ENCODE measurements at regions of chr1 and their contacts with region 1.

Region 1: DNA sequence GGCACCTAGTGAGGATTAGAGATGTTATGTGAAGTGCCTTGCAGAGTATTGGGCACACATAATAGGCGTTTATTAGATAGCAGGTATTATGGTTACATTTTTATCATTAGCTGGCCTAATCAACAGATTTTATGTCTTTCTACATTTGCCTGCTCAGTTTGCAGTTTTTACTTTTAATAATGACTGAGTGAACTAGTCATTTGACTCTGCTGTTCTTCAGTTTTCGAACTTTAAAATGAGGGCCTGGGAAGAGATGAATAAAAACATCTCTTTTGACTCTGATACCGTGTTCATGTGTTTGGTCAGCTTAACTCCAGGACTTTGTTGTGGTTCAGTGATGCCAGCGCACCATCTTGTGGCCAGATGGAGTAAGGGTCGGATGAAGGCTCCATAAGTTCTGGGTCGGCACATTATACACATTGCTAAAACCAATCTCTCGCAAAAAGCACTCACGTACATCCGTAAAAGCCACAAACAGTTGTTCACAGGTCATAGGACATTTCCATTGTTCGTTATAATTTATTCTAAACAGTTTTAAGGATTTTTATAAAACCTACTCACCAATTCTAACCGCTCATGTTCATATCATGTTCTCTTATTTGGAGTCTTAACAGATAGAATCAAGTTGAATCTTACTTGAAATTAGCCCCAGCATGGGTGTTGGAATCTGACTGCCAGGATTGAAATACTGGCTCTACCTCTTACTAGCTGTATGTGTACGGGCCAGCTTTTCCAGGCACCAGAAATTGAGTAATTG is 78.4 kb upstream of the GPR88 start:
- DNase-seq: peak; percentile 88
- H3K4me3 Mint-ChIP-seq: peak overlapping the region; percentile 17
- H3K27ac Mint-ChIP-seq: peak overlapping the region; percentile 73
- H3K4me1 Mint-ChIP-seq: peaks cover 58% of the 10 kb centered on the region
- H3K27me3 Mint-ChIP-seq: no peaks in the 10 kb centered on the region

Region 2: DNA sequence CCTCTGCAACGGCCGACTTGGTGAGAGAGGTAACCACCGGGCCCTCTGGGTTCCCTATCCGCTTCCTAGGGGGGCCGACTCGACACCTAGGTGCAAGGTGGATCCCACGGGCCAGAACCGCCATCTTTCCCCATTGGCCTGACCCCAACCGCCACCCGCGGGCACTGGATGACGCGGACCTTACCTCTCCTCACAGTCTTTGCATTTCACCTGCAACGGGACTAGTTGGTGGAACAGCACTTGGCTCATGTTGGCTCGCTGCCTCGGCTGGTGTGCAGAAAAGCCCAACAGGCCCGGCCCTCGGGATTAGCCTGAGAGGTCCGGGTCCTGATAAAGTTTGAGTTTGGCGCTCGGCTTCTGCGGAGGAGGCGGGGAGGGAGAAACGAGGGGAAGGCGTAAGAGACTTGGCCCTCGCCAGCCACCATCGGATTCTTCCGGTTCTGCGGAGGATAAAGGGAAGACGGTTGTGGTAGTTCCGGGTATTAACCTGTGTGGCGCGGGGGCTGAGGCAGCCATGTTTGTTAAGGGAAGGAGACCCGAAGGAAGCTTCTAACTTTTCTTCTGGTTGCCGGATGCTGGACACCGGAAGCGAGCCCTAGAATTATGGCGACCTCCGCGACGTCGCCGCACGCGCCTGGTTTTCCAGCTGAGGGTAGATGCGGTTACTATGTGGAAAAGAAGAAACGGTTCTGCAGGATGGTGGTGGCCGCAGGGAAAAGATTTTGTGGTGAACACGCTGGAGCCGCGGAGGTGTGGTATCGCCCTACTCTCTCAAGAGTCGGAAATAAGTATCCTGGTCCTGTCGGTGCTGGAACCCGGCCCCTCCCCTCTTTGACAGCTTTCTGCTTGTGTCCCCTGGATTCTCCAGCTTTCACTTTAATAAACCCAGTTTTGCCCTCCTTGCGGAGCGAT is 326.7 kb before region 1 on chr1 and contains the starts of genes SASS6 and TRMT13:
- CTCF ChIA-PET with region 1: interaction called, 8 read pairs
- POLR2A ChIA-PET with region 1: no interaction called
- intact Hi-C with region 1: loop called (anchors 1 kb)
- DNase-seq: peak; percentile 97
- H3K4me3 Mint-ChIP-seq: peak within 1 kb of the TSS; percentile 96
- H3K27ac Mint-ChIP-seq: peak within 1 kb of the TSS; percentile 93
- H3K4me1 Mint-ChIP-seq: peaks cover 39% of the 10 kb centered on the region
- H3K27me3 Mint-ChIP-seq: no peaks in the 10 kb centered on the region
- total RNA-seq, gene SASS6: 11.5 to 12.0 TPM
- total RNA-seq, gene TRMT13: 17.5 TPM

Region 3: DNA sequence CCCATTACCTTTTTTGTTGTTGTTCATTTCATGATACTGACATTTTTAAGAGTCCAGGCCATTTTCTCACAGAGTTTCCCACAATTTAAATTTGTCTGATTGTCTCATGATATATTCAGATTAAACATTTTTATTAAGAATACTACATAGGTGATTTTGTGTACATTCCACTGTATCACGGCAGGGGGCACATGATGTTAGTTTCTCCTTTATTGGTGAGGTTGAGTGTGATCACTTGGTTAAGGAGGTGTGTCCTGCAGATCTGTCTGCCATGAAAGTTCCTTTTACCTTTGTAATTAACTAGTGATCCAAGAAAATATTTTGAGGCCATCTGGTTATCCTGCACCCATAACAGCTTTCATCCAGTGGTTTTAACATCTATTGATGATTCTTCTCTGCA is 181.7 kb before region 1 on chr1:
- CTCF ChIA-PET with region 1: interaction called, 9 read pairs
- POLR2A ChIA-PET with region 1: no interaction called
- intact Hi-C with region 1: loop called (anchors 1 kb)
- DNase-seq: peak; percentile 38
- H3K4me3 Mint-ChIP-seq: no peak overlapping the region
- H3K27ac Mint-ChIP-seq: no peak overlapping the region
- H3K4me1 Mint-ChIP-seq: peaks cover 22% of the 10 kb centered on the region
- H3K27me3 Mint-ChIP-seq: no peaks in the 10 kb centered on the region

Region 4: DNA sequence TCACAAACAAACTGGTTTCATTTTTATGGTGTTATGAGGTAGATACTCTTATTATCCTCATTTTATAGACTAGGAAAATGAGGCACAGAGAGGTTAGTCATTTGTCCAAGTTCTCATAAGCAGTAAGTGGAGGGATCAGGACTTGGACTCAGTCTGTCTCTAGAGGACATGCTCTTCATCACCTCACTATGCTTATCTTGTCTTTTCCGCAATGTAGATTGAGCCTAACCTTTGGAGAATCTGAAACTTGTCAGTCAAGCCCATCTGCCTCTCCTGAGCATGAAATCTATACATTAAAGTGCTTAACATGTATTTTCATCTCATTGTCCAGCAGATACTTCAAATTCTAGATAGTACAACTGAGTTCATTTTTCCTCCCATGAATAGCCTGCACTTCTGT is 119.0 kb before region 1 on chr1:
- CTCF ChIA-PET with region 1: no interaction called
- POLR2A ChIA-PET with region 1: no interaction called
- intact Hi-C with region 1: no loop called
- DNase-seq: no peak
- H3K4me3 Mint-ChIP-seq: no peak overlapping the region
- H3K27ac Mint-ChIP-seq: no peak overlapping the region
- H3K4me1 Mint-ChIP-seq: no peaks in the 10 kb centered on the region
- H3K27me3 Mint-ChIP-seq: no peaks in the 10 kb centered on the region

Region 5: DNA sequence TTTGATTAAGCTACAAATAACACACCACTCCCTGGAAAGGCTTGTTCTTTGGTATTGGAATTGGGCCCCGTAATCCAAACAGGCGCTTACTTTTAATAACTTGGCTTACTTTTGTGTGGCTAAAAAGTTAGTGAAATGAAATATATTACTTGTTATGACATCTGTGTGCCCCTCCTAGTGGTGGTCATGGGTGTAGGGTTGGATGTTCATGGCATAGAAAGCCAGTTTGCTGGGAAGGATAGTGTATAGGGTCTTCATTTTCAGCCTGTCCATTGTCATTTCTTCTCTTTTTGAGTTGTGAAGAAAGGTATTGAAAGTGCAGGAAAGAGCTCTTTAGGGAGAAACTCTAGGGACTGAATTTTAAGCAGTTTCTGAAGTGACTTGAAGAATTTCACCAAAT is 101.3 kb before region 1 on chr1:
- CTCF ChIA-PET with region 1: interaction called, 54 read pairs
- POLR2A ChIA-PET with region 1: interaction called, 11 read pairs
- intact Hi-C with region 1: loop called (anchors 2 kb)
- DNase-seq: no peak
- H3K4me3 Mint-ChIP-seq: no peak overlapping the region
- H3K27ac Mint-ChIP-seq: peak overlapping the region; percentile 59
- H3K4me1 Mint-ChIP-seq: peaks cover 80% of the 10 kb centered on the region
- H3K27me3 Mint-ChIP-seq: no peaks in the 10 kb centered on the region

Region 6: DNA sequence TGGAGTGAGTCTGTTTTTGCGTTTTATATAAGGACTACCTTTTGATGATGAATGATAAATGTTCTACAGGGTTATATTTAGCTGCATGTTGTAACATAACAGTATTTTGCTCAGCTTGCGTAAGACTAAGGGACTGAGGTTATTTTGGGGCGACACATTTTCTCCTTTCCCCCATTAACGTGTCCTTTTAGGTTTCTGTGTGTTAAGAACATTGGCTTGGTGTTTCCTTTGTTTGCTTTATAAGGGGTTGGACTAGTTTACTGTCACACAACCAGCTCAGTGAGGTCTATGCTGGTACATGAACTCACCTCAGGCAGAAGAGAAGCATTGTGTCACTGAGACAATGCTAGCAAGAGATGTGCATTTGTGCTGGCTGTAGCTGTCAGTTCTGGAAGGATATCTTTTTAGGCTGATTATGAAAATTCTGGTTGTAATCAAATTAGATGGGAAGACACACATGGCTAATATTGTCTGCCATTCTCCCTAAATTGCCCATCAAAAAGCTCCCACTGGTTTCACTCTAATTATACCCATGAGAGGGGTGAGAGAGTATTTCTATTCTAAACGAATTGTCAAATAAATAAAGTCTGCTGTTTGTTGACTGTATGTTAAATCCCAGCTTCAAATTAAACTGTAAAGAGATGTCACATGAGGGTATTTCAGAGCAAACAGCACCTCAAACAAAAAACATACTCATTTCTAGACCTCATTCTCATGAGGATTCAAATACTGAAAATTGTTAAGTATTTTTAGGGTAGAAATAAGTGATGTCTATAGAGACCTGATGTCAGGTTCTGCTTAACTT is 44.6 kb before region 1 on chr1:
- CTCF ChIA-PET with region 1: interaction called, 9 read pairs
- POLR2A ChIA-PET with region 1: interaction called, 4 read pairs
- intact Hi-C with region 1: loop called (anchors 1 kb)
- DNase-seq: no peak
- H3K4me3 Mint-ChIP-seq: peak overlapping the region; percentile 39
- H3K27ac Mint-ChIP-seq: peak overlapping the region; percentile 90
- H3K4me1 Mint-ChIP-seq: peaks cover 72% of the 10 kb centered on the region
- H3K27me3 Mint-ChIP-seq: no peaks in the 10 kb centered on the region

Region 7: GRCh38 chr1:100443811-100444571 is 15.5 kb before region 1 on chr1:
- CTCF ChIA-PET with region 1: interaction called, 20 read pairs
- POLR2A ChIA-PET with region 1: interaction called, 3 read pairs
- intact Hi-C with region 1: no loop called
- DNase-seq: peak; percentile 65
- H3K4me3 Mint-ChIP-seq: peak overlapping the region; percentile 82
- H3K27ac Mint-ChIP-seq: peak overlapping the region; percentile 98
- H3K4me1 Mint-ChIP-seq: peaks cover 84% of the 10 kb centered on the region
- H3K27me3 Mint-ChIP-seq: no peaks in the 10 kb centered on the region

Region 8: DNA sequence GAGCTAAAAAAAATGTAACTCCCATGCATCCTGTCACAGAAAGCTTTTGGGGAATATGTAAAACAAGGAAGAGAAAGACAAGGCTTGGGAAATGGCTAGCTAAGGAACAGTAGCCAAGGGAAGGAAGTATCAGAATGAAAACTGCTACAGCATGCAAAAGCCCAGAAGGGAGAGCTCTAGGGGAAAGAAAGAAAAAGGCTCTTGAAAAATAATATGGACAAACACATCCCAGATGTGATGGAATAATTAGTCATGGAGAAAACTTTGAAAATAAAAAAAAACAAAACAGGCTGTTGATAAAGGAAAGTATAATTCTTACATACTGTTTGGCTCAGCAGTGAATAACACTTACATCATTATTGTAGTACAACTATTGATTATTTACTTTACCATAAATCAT is 212.1 kb after region 1 on chr1:
- CTCF ChIA-PET with region 1: no interaction called
- POLR2A ChIA-PET with region 1: no interaction called
- intact Hi-C with region 1: no loop called
- DNase-seq: no peak
- H3K4me3 Mint-ChIP-seq: no peak overlapping the region
- H3K27ac Mint-ChIP-seq: no peak overlapping the region
- H3K4me1 Mint-ChIP-seq: no peaks in the 10 kb centered on the region
- H3K27me3 Mint-ChIP-seq: peaks cover 5% of the 10 kb centered on the region

Region 9: GRCh38 chr1:100746542-100746932 is 287.0 kb after region 1 on chr1:
- CTCF ChIA-PET with region 1: no interaction called
- POLR2A ChIA-PET with region 1: no interaction called
- intact Hi-C with region 1: no loop called
- DNase-seq: no peak
- H3K4me3 Mint-ChIP-seq: no peak overlapping the region
- H3K27ac Mint-ChIP-seq: no peak overlapping the region
- H3K4me1 Mint-ChIP-seq: no peaks in the 10 kb centered on the region
- H3K27me3 Mint-ChIP-seq: peaks cover 5% of the 10 kb centered on the region

Region 10: DNA sequence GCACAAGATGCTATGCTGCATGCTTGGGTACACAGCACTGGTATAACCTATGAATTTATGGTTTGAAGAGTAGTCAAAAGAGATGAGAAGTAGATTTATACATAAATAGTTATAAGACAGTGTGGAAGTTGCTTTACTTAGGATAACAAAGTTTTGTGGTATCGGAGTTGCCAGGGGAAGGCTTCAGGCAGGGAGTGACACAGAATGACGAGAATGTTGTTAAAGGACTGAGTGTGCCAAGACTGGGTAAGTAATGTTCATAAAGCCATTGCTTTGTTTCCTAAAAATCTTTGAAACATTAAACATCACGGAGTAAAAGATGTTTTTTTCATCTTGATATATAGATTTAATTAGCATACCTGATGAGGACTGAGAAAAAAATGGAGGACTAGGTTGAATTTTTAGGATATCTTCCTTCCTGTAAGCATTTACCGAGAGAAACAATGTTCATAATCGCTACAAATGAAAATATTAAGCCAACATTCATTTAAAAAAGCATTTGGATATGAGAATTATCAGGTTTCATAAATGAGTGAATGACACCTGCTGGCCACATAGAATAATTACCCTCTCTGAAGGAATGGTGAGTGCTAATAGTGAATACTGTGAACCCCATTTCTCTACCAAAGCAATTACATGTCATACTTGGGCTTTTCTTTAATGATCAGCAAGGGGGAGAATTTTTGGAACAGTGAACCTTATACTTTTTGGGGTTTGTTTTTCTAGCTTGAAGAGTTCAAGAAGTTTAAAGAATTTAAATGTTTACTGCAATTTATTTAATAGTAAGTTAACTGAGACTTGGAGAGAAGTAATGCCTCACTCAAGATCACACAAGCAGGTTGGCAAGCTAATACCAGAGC is 406.7 kb after region 1 on chr1:
- CTCF ChIA-PET with region 1: interaction called, 116 read pairs
- POLR2A ChIA-PET with region 1: no interaction called
- intact Hi-C with region 1: loop called (anchors 1 kb)
- DNase-seq: no peak
- H3K4me3 Mint-ChIP-seq: no peak overlapping the region
- H3K27ac Mint-ChIP-seq: no peak overlapping the region
- H3K4me1 Mint-ChIP-seq: no peaks in the 10 kb centered on the region
- H3K27me3 Mint-ChIP-seq: no peaks in the 10 kb centered on the region

Region 11: DNA sequence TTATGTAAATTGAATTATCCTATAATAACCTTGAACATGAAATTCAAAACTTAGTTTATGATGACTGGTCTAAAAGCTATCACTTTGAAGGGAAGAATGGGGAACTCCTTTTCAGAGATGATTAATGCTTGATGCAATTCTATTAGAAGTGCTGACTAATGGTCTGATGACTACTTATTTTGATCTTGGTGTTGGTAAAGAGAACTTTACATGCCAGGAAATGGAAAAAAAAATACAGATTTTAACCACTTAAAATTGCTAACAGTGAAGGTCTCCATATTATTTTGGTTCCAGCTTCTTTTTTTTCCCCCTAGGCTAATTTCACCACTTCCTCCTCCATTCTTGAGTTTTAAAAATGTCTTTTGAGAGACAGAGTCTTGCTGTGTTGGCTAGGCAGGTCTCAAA is 800.2 kb after region 1 on chr1:
- CTCF ChIA-PET with region 1: no interaction called
- POLR2A ChIA-PET with region 1: no interaction called
- intact Hi-C with region 1: no loop called
- DNase-seq: no peak
- H3K4me3 Mint-ChIP-seq: peak overlapping the region; percentile 38
- H3K27ac Mint-ChIP-seq: peak overlapping the region; percentile 88
- H3K4me1 Mint-ChIP-seq: peaks cover 72% of the 10 kb centered on the region
- H3K27me3 Mint-ChIP-seq: no peaks in the 10 kb centered on the region

Measured in activated CD4-positive, alpha-beta memory T cell treated with anti-CD3 and anti-CD28 coated beads for 36 hours (primary cell).